ENCODE measurements at regions of chr17 and their contacts with region 1.

Region 1: GRCh38 chr17:27601069-27601975 is 29.7 kb upstream of the LGALS9 start:
- DNase-seq: peak; percentile 88
- ATAC-seq: peak; percentile 31
- H3K4me3 Mint-ChIP-seq: no peak overlapping the region
- H3K27ac Mint-ChIP-seq: no peak overlapping the region
- H3K4me1 Mint-ChIP-seq: peaks cover 16% of the 10 kb centered on the region
- H3K27me3 Mint-ChIP-seq: no peaks in the 10 kb centered on the region

Region 2: GRCh38 chr17:27245230-27245696 is 356.1 kb before region 1 on chr17:
- CTCF ChIA-PET with region 1: interaction called, 17 read pairs
- POLR2A ChIA-PET with region 1: no interaction called
- DNase-seq: peak; percentile 62
- ATAC-seq: peak; percentile 95
- H3K4me3 Mint-ChIP-seq: no peak overlapping the region
- H3K27ac Mint-ChIP-seq: no peak overlapping the region
- H3K4me1 Mint-ChIP-seq: peaks cover 13% of the 10 kb centered on the region
- H3K27me3 Mint-ChIP-seq: peaks cover 12% of the 10 kb centered on the region

Region 3: DNA sequence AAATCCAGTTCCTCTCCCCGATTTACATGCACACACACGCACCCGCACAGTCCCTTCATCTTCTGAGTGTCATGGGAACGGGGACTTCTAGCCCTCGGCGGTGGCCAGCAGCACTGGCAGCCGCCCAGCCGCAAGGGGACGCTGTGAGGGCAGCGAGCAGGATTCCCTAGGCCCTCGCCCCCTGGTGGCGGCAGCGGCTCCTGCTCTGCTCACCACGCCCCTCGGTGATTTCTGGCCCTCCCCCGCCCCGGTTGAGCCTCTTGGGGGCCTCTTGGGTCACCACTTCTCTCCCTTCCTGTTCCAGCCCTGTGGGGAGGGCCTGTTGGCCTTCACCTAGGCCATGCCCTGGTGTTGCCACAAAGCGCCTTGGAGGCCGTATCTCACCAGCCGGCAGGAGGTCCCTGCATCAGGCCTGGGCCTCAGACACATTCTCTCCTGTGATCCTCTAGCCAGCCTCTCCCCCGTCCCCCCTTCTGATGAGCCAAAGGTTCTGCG is 220.3 kb before region 1 on chr17:
- CTCF ChIA-PET with region 1: interaction called, 69 read pairs
- POLR2A ChIA-PET with region 1: interaction called, 3 read pairs
- DNase-seq: peak; percentile 83
- ATAC-seq: peak; percentile 91
- H3K4me3 Mint-ChIP-seq: no peak overlapping the region
- H3K27ac Mint-ChIP-seq: no peak overlapping the region
- H3K4me1 Mint-ChIP-seq: peaks cover 7% of the 10 kb centered on the region
- H3K27me3 Mint-ChIP-seq: peaks cover 22% of the 10 kb centered on the region

Region 4: DNA sequence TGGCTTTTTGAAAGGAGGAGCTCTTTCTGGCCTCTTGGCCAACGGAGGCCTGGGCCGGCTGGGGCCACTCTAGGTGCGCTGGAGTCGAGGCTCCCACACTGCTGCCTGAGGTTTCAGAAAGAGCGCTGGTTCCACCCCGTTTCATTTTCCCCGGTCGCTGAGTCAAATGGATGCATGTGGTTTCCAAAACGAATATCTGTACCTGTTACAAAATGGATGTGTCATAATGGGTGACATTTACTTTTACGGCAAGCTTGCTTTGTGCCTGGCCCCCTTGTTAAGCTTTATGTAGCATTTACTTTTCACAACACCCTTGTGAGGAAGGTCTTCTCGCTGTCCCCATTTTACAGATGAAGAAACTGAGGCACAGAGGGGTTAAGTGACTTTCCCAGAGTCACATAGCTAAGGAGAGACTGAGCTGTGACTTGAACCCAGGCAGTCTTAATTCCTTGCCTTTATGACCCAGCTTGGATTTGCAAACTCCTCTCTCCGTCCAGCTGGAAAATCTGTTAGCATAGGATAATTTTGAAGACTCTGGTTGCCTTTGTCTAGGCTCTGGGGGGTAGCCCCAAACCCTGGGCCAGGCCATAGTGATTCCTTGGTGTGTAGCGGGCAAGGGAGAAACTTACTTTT is 134.5 kb before region 1 on chr17:
- CTCF ChIA-PET with region 1: interaction called, 36 read pairs
- POLR2A ChIA-PET with region 1: no interaction called
- DNase-seq: peak; percentile 85
- ATAC-seq: peak; percentile 85
- H3K4me3 Mint-ChIP-seq: peak overlapping the region; percentile 70
- H3K27ac Mint-ChIP-seq: peak overlapping the region; percentile 92
- H3K4me1 Mint-ChIP-seq: peaks cover 88% of the 10 kb centered on the region
- H3K27me3 Mint-ChIP-seq: no peaks in the 10 kb centered on the region

Region 5: DNA sequence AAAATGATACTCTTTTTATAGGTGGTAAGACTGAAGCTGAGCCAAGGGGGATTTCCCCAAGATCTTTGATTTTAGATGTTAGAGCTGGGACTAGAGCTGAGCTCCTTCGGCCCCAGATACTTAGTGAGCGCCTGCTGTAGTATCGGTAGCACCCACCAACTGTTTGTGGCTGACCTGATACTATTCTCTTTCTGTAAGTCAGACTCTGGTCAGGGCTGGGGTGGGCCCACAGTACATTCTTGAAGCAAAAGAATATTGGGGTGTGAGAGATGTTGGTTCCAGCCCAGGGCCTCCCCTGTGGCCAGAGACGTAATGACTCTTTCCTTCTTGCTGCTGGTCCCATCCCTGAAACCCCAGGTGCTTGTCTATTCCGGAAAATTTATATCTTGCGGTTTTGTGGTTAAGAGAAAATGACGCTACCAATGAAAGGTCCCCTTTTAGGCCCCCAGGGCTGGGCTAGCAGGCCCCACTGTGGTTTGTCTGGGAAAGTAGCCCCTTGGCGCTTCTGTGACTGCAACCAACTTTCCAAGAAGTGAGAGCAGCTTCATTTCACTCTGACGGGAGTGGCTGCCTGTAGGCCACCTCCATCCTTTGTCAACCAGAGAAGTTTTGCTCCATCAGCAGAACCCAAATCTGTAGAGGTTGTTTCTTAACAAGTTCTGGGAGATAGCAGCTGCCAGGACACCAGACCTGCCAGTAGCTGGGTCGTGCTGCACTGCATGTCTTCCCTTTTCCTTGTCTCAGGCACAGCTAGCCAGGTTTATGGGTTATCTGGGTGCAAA is 56.8 kb before region 1 on chr17:
- CTCF ChIA-PET with region 1: interaction called, 25 read pairs
- POLR2A ChIA-PET with region 1: no interaction called
- DNase-seq: peak; percentile 78
- ATAC-seq: peak; percentile 80
- H3K4me3 Mint-ChIP-seq: peak overlapping the region; percentile 60
- H3K27ac Mint-ChIP-seq: peak overlapping the region; percentile 82
- H3K4me1 Mint-ChIP-seq: peaks cover 79% of the 10 kb centered on the region
- H3K27me3 Mint-ChIP-seq: no peaks in the 10 kb centered on the region

Region 6: DNA sequence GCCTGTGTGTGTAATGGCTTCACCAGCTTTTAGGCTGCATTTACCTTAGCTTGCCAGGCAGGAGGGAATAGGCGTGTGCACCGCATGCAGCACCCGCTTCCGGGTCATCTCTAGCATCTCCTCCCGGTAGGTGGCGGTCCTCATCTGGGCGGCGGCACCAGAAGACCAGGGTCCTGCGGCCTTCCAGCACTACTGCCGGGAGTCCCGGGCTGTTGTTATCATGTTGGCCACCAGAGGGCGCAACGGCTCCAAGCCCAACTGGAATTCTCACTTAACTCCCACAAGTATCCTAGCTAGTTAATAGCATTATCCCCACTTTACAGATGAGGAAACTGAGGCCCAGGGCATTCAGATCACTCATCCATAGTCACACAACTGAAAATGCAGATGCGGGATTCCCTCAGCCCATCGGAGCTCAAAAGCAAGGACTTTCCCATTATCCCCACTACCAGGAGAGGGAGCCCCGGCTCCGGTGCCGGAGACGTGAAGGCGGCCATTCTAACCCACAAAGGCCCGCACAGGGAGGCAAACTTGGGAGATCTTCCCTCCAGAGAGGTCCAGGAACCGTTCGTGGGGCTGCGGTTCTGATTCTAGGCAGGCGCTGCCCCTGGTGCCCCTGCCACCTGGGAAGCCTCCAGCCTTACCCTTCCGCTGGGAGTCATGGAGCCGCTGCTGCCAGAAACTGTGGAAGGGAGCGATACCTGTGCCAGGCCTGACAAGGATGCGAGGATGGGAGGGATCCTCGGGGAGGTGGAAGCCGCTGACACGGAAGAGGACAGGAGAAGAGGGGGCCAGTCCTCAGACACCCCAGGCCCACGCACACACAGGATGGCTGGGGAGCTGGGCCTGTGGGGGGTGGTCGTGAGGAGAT is 53.6 kb after region 1 on chr17:
- CTCF ChIA-PET with region 1: interaction called, 281 read pairs
- POLR2A ChIA-PET with region 1: no interaction called
- DNase-seq: peak; percentile 79
- ATAC-seq: peak; percentile 88
- H3K4me3 Mint-ChIP-seq: no peak overlapping the region
- H3K27ac Mint-ChIP-seq: no peak overlapping the region
- H3K4me1 Mint-ChIP-seq: peaks cover 13% of the 10 kb centered on the region
- H3K27me3 Mint-ChIP-seq: no peaks in the 10 kb centered on the region

Measured in activated CD8-positive, alpha-beta T cell treated with anti-CD3 and anti-CD28 coated beads, Interleukin-2, amount 10 ng/mL, durations not matched to agents 7 days and 5 days (primary cell).